Activated naive CD8-positive, alpha-beta T cell treated with anti-CD3 and anti-CD28 coated beads, Interleukin-2, amount 10 ng/mL, durations not matched to agents 7 days and 5 days (primary cell): ENCODE measurements at regions of chr1 and their contacts with region 1.

Region 1: DNA sequence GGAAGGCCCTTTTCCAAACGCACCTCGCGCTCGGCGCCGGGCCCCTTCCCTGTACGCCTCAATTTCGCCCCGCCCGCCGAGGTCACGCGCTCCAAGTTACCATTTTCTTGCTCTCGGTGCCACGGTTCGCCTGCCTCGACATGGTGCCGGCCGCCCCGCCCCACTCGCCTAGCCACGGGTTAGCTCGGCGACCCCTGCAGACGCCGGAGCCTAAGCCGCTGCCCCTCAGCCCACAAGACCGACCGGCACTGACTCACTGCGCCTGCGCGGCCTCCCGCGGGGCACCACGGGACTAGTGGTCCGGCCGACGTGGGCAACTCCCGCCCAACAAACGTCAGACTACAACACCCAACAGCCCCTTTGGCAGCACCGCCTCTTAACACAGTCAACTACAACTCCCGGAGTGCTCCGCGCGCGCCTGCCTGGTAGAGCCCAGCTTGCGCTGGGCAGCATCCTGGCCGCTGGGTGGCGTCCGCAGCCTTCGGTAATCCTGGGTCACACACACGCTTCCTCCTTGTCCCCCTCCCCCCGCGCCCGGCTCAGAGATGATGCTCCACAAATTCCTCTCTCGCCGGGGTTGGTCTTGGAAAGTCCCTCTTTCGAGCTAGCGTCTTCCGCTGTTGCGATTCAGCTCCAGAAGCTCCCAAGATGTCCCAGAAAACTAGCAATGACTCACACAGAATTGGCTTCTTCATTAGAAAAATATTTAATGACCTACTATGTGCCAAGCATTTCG is at the start of gene TRAPPC3:
- DNase-seq: peak; percentile 98
- ATAC-seq: peak; percentile 93
- H3K4me3 Mint-ChIP-seq: peak within 1 kb of the TSS; percentile 98
- H3K27ac Mint-ChIP-seq: peak within 1 kb of the TSS; percentile 100
- H3K4me1 Mint-ChIP-seq: peaks cover 46% of the 10 kb centered on the region
- H3K27me3 Mint-ChIP-seq: no peaks in the 10 kb centered on the region
- total RNA-seq, gene TRAPPC3: 51.7 to 52.5 TPM

Region 2: GRCh38 chr1:36024839-36025238 is 124.6 kb before region 1 on chr1:
- POLR2A ChIA-PET with region 1: no interaction called
- DNase-seq: no peak
- ATAC-seq: no peak
- H3K4me3 Mint-ChIP-seq: no peak overlapping the region
- H3K27ac Mint-ChIP-seq: no peak overlapping the region
- H3K4me1 Mint-ChIP-seq: peaks cover 9% of the 10 kb centered on the region
- H3K27me3 Mint-ChIP-seq: no peaks in the 10 kb centered on the region

Region 3: GRCh38 chr1:36088575-36089443 is 60.6 kb before region 1 on chr1 and contains the start of gene ADPRS:
- POLR2A ChIA-PET with region 1: no interaction called
- DNase-seq: peak; percentile 94
- ATAC-seq: peak; percentile 88
- H3K4me3 Mint-ChIP-seq: peak within 1 kb of the TSS; percentile 87
- H3K27ac Mint-ChIP-seq: peak within 1 kb of the TSS; percentile 86
- H3K4me1 Mint-ChIP-seq: peaks cover 10% of the 10 kb centered on the region
- H3K27me3 Mint-ChIP-seq: peaks cover 12% of the 10 kb centered on the region
- total RNA-seq, gene ADPRS: 30.7 to 32.7 TPM

Region 4: DNA sequence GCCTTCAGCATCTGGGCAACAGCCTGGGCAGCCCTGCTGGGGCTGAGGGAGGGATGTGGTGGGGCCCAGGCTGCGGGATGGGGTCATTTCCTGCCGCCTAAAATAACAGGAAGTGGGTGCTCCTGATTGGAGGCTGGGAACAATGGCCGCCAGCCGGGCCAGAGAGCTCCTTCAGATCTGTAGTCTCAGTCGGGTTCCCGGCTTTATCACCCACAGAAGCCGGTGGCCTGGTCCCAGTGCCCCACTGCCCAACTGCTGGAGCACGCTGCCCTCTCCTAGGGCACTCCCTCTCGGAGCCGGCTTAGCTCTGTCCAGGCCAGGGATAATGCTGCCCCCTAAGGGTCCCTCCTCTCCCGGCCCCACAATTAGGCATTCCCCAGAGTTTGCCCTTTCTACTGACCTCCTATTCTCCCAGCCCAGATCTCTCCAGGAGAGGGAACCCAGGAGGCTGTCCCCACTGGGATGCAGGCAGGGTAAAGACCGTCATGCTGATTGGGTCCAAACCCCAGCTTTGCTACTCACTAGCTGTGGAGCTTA is 11.6 kb after region 1 on chr1:
- POLR2A ChIA-PET with region 1: interaction called, 98 read pairs
- DNase-seq: peak; percentile 77
- ATAC-seq: peak; percentile 43
- H3K4me3 Mint-ChIP-seq: peak overlapping the region; percentile 91
- H3K27ac Mint-ChIP-seq: peak overlapping the region; percentile 97
- H3K4me1 Mint-ChIP-seq: peaks cover 65% of the 10 kb centered on the region
- H3K27me3 Mint-ChIP-seq: no peaks in the 10 kb centered on the region